IMR-90 (cell line): ENCODE measurements at regions of chr1 and their contacts with region 1.

Region 1: GRCh38 chr1:110245876-110246620 is 35.9 kb downstream of the KCNC4 start:
- DNase-seq: no peak
- ATAC-seq: no peak
- H3K4me3 ChIP-seq: no peak overlapping the region
- H3K27ac ChIP-seq: no peak overlapping the region
- H3K4me1 ChIP-seq: no peaks in the 10 kb centered on the region; the same call in 1 of the 2 replicates
- H3K27me3 ChIP-seq: peaks cover 47% of the 10 kb centered on the region
- CTCF ChIP-seq: no peak
- POLR2A ChIP-seq: no peak
- RAD21 ChIP-seq: no peak

Region 2: GRCh38 chr1:110214516-110215379 is 31.3 kb before region 1 on chr1:
- CTCF ChIA-PET with region 1: no interaction called
- POLR2A ChIA-PET with region 1: no interaction called
- dilution Hi-C with region 1: no loop called
- in situ Hi-C with region 1: no loop called
- intact Hi-C with region 1: no loop called
- DNase-seq: peak; percentile 9
- ATAC-seq: no peak
- H3K4me3 ChIP-seq: no peak overlapping the region
- H3K27ac ChIP-seq: no peak overlapping the region
- H3K4me1 ChIP-seq: no peaks in the 10 kb centered on the region
- H3K27me3 ChIP-seq: peaks cover 57% of the 10 kb centered on the region
- CTCF ChIP-seq: no peak
- POLR2A ChIP-seq: no peak
- RAD21 ChIP-seq: no peak

Region 3: GRCh38 chr1:110292031-110292741 is 46.1 kb after region 1 on chr1:
- CTCF ChIA-PET with region 1: no interaction called
- POLR2A ChIA-PET with region 1: no interaction called
- dilution Hi-C with region 1: no loop called
- in situ Hi-C with region 1: no loop called
- intact Hi-C with region 1: loop called (anchors 5 kb)
- DNase-seq: peak; percentile 50
- ATAC-seq: peak; percentile 84
- H3K4me3 ChIP-seq: no peak overlapping the region
- H3K27ac ChIP-seq: no peak overlapping the region
- H3K4me1 ChIP-seq: no peaks in the 10 kb centered on the region; the same call in 1 of the 2 replicates
- H3K27me3 ChIP-seq: peaks cover 15% of the 10 kb centered on the region
- CTCF ChIP-seq: no peak
- POLR2A ChIP-seq: no peak
- RAD21 ChIP-seq: no peak